HepG2 (cell line): ENCODE measurements at regions of chr2 and their contacts with region 1.

Region 1: GRCh38 chr2:118321432-118322131 is 233.3 kb downstream of the INSIG2 start:
- DNase-seq: peak; percentile 43
- ATAC-seq: peak; percentile 99
- H3K4me3 ChIP-seq: no peak overlapping the region
- H3K27ac ChIP-seq: no peak overlapping the region
- H3K4me1 ChIP-seq: peaks cover 10% of the 10 kb centered on the region
- H3K27me3 ChIP-seq: no peaks in the 10 kb centered on the region
- CTCF ChIP-seq: peak; percentile 84
- EP300 ChIP-seq: no peak
- POLR2A ChIP-seq: no peak
- RAD21 ChIP-seq: no peak

Region 2: GRCh38 chr2:118221666-118222594 is 99.7 kb before region 1 on chr2:
- CTCF ChIA-PET with region 1: no interaction called
- POLR2A ChIA-PET with region 1: no interaction called
- in situ Hi-C with region 1: no loop called
- intact Hi-C with region 1: loop called (anchors 10 kb)
- DNase-seq: peak; percentile 61
- ATAC-seq: peak; percentile 97
- H3K4me3 ChIP-seq: no peak overlapping the region
- H3K27ac ChIP-seq: no peak overlapping the region
- H3K4me1 ChIP-seq: no peaks in the 10 kb centered on the region
- H3K27me3 ChIP-seq: peaks cover 2 to 14% of the 10 kb centered on the region in 2 experiments; a peak in 3 of 5 replicates
- CTCF ChIP-seq: peak; percentile 81
- EP300 ChIP-seq: no peak
- POLR2A ChIP-seq: no peak
- RAD21 ChIP-seq: peak; percentile 50; the same call in 1 of the 2 replicates